Activated B cell treated with CpG ODN at 0.5 μM for 24 hours (primary cell): ENCODE measurements at regions of chr6 and their contacts with region 1.

Region 1: DNA sequence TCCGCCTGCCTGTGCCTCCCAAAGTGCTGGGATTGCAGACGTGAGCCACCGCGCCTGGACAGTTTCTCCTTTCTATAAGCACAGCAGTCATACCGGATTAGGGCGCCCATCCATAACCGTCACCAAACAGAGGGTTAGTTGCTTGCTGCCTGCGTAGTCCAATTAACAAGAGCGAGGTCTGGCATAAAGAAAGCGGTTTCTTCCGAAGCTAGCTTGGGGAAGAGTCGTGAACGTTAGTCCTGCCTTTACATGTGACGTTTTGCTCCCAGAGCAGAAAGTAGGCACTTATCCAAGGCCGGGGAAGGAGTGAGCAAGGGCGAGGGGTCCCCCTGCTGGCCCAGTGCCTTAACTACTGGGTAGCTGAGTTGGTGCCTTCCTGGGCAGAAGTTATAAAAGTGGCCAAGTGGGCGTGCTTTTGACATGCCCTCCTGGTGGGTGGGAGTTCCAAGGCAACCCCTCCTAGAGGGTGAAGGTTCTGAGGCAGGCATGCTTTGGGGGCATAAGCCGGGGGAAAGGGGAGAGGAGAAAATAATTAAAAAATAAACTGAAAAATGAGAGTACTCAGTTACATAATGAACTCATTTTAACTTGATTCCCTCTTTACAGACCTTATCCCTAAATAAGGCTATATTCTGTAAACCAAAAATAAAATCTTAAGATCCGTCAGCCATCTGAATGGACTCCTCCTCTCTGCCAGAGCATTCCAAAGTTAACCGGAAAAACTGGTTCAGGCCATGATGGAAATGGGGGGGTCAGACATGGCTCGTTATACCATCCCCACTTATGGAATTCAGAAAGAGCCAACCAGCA is 88.0 kb downstream of the FAM217A start:
- DNase-seq: peak; percentile 59
- ATAC-seq: peak; percentile 95
- H3K4me3 Mint-ChIP-seq: no peak overlapping the region
- H3K27ac Mint-ChIP-seq: no peak overlapping the region
- H3K4me1 Mint-ChIP-seq: peaks cover 9% of the 10 kb centered on the region
- H3K27me3 Mint-ChIP-seq: no peaks in the 10 kb centered on the region
- CTCF ChIP-seq: no peak

Region 2: DNA sequence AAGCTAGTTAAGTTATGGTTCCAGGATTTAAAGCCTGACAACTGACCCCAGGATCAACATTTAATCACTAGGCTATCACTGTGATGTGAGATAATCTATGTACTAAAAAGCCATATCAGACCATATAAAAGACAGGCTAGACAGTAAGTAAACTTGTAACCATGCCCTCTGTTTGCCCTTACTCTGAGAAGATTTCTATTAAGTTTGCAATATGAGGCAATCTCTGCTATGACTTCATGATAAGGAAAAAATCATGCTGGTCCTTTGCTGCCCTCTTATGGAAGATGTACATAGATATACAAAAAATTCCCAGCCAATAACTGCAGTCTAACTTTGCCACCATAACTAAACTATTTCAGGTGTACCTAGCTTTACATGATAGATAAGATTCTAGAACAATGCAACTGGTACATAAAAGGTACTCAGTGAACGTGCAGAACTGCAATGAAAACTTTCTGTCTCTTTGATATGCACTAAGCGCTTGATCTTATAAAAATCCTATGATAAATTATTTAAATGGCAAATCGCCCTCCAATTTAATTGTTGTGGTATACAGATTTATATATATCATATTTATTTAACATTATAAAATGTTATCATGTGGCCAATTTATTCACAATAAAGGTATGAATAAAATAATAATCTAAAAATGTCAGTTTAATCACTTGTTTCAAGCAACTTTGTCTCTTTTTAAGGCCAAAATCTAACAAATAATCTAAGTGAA is 17.6 kb after region 1 on chr6:
- CTCF ChIA-PET with region 1: interaction called, 7 read pairs
- POLR2A ChIA-PET with region 1: no interaction called
- intact Hi-C with region 1: loop called (anchors 2 kb)
- DNase-seq: no peak
- ATAC-seq: peak; percentile 49
- H3K4me3 Mint-ChIP-seq: no peak overlapping the region
- H3K27ac Mint-ChIP-seq: no peak overlapping the region
- H3K4me1 Mint-ChIP-seq: peaks cover 25% of the 10 kb centered on the region
- H3K27me3 Mint-ChIP-seq: no peaks in the 10 kb centered on the region
- CTCF ChIP-seq: no peak